ENCODE measurements at regions of chr1 and their contacts with region 1.

Region 1: DNA sequence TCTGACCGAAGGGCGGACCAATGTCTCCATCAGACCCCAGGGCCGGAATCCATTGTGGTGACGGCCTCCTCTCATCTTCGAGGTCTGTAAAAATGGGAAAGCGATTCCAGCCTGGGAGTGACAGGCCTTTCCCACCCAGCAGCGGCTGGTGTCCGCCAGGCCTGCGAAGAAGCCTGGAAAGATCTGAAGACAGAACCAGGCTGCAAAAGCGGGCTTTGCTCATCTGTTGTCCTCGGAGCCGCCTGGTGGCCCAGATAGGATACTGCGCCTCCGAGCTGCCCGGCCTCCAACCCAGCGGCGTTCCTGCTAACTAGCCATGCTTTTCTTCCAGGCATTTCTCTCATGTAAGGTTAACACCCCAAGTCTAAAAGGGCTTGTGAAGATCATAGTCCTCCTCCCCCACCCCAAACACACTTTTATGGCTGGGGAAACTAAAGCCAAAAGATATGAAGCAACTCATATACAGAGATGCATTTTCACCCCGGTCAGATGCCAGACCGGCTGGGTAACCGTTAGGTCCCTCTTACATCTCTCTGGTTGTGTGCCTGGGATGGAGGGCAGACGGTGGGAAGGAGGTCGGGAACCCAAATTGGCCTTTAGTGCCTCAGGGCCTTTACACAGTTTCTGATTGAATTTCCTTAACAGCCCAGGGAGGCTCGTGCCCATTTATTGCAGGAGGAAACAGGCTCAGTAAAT is 1.9 kb upstream of the DHRS3 start:
- DNase-seq: peak; percentile 87
- ATAC-seq: peak; percentile 52
- H3K4me3 Mint-ChIP-seq: peak overlapping the region; percentile 95
- H3K27ac Mint-ChIP-seq: peak overlapping the region; percentile 64
- H3K4me1 Mint-ChIP-seq: peaks cover 50% of the 10 kb centered on the region
- H3K27me3 Mint-ChIP-seq: peaks cover 8% of the 10 kb centered on the region

Region 2: DNA sequence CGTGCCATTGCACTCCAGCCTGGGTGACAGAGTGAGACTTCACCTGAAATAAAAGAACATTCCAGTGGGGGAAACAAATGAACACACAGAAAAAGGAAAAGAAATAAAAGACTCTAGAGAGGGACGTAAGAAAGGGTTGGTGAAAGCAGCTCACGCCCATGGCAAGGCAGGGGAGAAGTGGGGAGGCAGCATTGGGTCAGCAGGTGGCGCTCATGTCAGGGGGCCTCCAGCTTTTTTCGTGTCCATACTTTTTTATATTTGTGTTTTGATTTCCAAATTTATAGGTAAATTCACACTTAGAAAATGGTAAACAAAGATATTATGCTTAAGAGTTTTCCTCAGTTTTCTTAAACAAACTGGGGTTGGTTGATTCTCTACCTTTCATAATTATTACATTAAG is 344.6 kb before region 1 on chr1:
- CTCF ChIA-PET with region 1: interaction called, 102 read pairs
- DNase-seq: peak; percentile 59
- ATAC-seq: no peak
- H3K4me3 Mint-ChIP-seq: no peak overlapping the region
- H3K27ac Mint-ChIP-seq: no peak overlapping the region
- H3K4me1 Mint-ChIP-seq: no peaks in the 10 kb centered on the region
- H3K27me3 Mint-ChIP-seq: no peaks in the 10 kb centered on the region

Region 3: DNA sequence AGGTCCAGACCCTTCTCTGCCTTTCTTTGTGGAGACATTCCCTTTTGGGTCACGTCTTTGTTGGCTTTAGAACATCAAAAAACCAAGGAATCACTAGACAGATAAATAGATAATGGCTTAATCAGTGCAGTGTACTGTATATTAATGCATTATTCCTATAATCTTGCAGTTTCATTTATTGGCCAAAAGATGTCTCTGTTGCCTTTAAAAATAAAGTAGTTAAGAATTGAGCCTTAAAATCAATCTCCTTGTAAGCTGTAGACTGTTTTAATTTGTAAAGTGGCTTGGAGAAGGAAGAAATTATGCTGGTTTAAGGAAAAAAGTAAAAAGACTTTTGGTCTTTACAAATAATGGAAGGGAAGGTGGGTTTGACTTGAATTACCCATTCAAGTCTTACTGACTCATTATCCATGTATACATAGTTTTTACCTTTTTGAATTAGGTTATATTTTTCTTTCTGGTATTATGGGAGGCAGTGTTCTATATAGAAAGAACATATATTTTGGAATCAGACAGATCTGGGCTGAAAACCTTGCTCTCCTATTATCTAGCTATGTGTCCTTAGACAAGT is 305.5 kb before region 1 on chr1:
- CTCF ChIA-PET with region 1: interaction called, 18 read pairs
- DNase-seq: no peak
- ATAC-seq: peak; percentile 49
- H3K4me3 Mint-ChIP-seq: no peak overlapping the region
- H3K27ac Mint-ChIP-seq: no peak overlapping the region
- H3K4me1 Mint-ChIP-seq: no peaks in the 10 kb centered on the region
- H3K27me3 Mint-ChIP-seq: no peaks in the 10 kb centered on the region

Region 4: DNA sequence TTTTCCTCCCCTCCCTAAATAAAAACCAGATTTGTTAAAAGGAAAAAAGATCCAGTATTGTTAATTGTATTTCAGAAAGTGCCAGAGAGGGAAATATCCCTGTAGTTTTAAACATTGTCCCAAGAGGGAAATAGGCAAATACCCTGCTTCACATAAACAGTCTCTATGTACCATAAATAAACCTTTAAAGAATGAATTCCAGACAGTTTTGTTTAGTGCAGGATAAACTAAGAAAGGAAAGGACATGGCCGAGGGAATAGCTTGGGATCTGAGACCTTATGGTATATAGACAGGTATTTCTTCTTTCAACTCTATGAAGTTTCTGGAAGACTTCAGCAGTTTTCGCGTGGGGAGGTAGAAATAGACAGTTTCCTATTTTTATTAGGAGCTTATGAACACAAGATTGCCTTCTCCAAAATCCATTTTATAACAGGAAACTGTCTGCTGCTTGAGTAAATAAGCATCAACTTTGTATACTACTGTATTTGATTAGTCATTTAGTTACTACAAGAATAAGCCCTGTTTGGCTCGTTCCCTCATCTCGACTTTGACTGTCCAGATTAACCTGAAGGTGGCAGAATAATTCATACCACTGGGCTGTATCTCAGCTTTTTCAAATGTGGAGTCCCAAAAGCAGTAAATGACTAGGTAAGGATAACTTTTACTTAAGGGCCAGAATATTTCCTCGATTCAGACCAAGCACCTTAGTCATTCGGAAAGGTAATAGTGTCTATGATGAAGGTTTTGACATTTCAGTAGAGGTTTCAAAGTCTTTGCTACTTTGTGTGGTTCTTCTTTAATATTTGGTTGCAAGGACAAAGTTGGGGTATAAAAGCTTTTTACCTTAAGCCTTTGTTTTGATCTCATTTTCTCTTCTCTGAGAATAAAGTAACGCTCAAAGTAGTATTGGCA is 212.6 kb before region 1 on chr1:
- CTCF ChIA-PET with region 1: interaction called, 16 read pairs
- DNase-seq: peak; percentile 47
- ATAC-seq: peak; percentile 85
- H3K4me3 Mint-ChIP-seq: no peak overlapping the region
- H3K27ac Mint-ChIP-seq: no peak overlapping the region
- H3K4me1 Mint-ChIP-seq: peaks cover 18% of the 10 kb centered on the region
- H3K27me3 Mint-ChIP-seq: no peaks in the 10 kb centered on the region

Region 5: DNA sequence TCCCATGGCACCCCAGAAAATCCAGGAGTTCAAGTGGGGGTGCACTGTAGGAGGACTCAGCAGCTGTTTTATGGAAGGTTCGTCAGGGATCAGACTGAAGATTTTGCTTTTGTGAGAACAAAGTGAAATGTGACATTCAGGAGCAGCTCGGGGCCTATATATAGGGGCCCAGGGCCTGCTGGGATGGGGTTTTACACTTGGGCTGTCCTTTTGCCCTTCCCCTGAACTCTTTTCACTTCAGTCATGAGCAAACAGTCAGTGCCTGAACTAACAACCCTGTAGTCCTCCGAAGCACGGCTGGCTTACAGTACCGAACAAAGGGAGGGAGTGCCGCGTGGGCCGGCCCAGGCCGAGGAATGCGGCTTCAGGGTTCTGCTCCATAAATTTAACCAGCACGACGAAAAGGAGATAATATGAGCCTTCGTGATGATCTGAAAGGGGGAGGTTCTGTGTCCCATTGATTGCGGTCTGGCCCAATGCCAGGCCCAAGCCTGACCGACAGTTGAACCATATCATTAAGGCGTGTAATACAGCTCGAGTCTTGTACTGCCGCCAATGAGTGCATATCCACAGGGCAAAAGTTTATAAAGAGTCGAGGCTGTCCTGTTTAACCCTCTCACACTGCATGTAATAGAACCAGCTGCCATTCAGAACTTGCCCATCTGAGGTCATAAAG is 141.9 kb before region 1 on chr1:
- CTCF ChIA-PET with region 1: interaction called, 14 read pairs
- DNase-seq: no peak
- ATAC-seq: peak; percentile 17
- H3K4me3 Mint-ChIP-seq: peak overlapping the region; percentile 5
- H3K27ac Mint-ChIP-seq: peak overlapping the region; percentile 82
- H3K4me1 Mint-ChIP-seq: peaks cover 83% of the 10 kb centered on the region
- H3K27me3 Mint-ChIP-seq: no peaks in the 10 kb centered on the region

Region 6: GRCh38 chr1:12604114-12604874 is 15.6 kb before region 1 on chr1:
- CTCF ChIA-PET with region 1: interaction called, 91 read pairs
- DNase-seq: peak; percentile 90
- ATAC-seq: peak; percentile 98
- H3K4me3 Mint-ChIP-seq: peak overlapping the region; percentile 28
- H3K27ac Mint-ChIP-seq: peak overlapping the region; percentile 52
- H3K4me1 Mint-ChIP-seq: peaks cover 29% of the 10 kb centered on the region
- H3K27me3 Mint-ChIP-seq: no peaks in the 10 kb centered on the region

Region 7: DNA sequence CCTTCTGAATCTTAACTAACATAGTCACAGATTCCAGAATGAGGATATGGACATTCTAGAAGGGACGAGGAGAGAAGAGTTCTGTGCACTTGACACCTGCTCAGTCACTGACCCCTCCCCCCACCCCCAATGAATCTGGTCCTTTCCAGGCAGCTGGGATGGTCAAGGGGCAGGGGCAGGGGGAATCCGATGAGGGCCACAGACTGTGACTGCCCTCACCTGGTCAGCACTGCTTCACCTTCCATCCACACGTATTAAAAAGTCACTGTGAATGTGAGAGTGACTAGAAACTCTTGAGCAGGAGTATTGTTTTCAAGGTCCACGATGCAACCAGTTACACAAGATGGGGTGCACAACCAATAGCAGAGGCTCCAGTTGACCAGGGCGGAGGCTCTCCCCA is 144.1 kb after region 1 on chr1:
- CTCF ChIA-PET with region 1: no interaction called
- DNase-seq: no peak
- ATAC-seq: no peak
- H3K4me3 Mint-ChIP-seq: no peak overlapping the region
- H3K27ac Mint-ChIP-seq: no peak overlapping the region
- H3K4me1 Mint-ChIP-seq: no peaks in the 10 kb centered on the region
- H3K27me3 Mint-ChIP-seq: peaks cover 21% of the 10 kb centered on the region

Measured in activated CD8-positive, alpha-beta memory T cell treated with anti-CD3 and anti-CD28 coated beads, Interleukin-2, amount 10 ng/mL, durations not matched to agents 7 days and 5 days (primary cell).